GM18951 (cell line): ENCODE measurements at regions of chr15 and their contacts with region 1.

Region 1: GRCh38 chr15:75029378-75030022 is 6.1 kb downstream of the PPCDC start:
- POLR2A ChIP-seq: no peak

Region 2: GRCh38 chr15:75201609-75202250 is 172.2 kb after region 1 on chr15 and contains the start of gene C15orf39:
- in situ Hi-C with region 1: loop called (anchors 5 kb)
- POLR2A ChIP-seq: peak; percentile 97

Region 3: GRCh38 chr15:75302318-75302717 is 272.8 kb after region 1 on chr15:
- in situ Hi-C with region 1: loop called (anchors 5 kb)
- POLR2A ChIP-seq: no peak